ENCODE measurements at regions of chr19 and their contacts with region 1.

Region 1: GRCh38 chr19:44093931-44094765 is at the start of gene ZNF224:
- DNase-seq: peak; percentile 66
- ATAC-seq: peak; percentile 93
- H3K4me3 Mint-ChIP-seq: peak within 1 kb of the TSS; percentile 99
- H3K27ac Mint-ChIP-seq: peak within 1 kb of the TSS; percentile 89
- H3K4me1 Mint-ChIP-seq: peaks cover 14% of the 10 kb centered on the region
- H3K27me3 Mint-ChIP-seq: no peaks in the 10 kb centered on the region
- CTCF ChIP-seq: no peak
- total RNA-seq, gene ZNF224: 49.2 and 53.3 TPM in 2 replicates

Region 2: GRCh38 chr19:43901395-43902390 is 192.5 kb before region 1 on chr19:
- CTCF ChIA-PET with region 1: no interaction called
- POLR2A ChIA-PET with region 1: no interaction called
- intact Hi-C with region 1: loop called (anchors 1 kb)
- DNase-seq: peak; percentile 62
- ATAC-seq: peak; percentile 96
- H3K4me3 Mint-ChIP-seq: peak overlapping the region; percentile 93
- H3K27ac Mint-ChIP-seq: peak overlapping the region; percentile 82
- H3K4me1 Mint-ChIP-seq: peaks cover 18% of the 10 kb centered on the region
- H3K27me3 Mint-ChIP-seq: no peaks in the 10 kb centered on the region
- CTCF ChIP-seq: no peak

Region 3: GRCh38 chr19:44002566-44003460 is 91.3 kb before region 1 on chr19 and contains the start of gene ZNF230:
- CTCF ChIA-PET with region 1: interaction called, 3 read pairs
- POLR2A ChIA-PET with region 1: interaction called, 9 read pairs
- intact Hi-C with region 1: loop called (anchors 1 kb)
- DNase-seq: peak; percentile 63
- ATAC-seq: peak; percentile 94
- H3K4me3 Mint-ChIP-seq: peak within 1 kb of the TSS; percentile 99
- H3K27ac Mint-ChIP-seq: peak within 1 kb of the TSS; percentile 93
- H3K4me1 Mint-ChIP-seq: peaks cover 17% of the 10 kb centered on the region
- H3K27me3 Mint-ChIP-seq: no peaks in the 10 kb centered on the region
- CTCF ChIP-seq: no peak
- total RNA-seq, gene ZNF230: 12.1 and 15.0 TPM in 2 replicates

Region 4: DNA sequence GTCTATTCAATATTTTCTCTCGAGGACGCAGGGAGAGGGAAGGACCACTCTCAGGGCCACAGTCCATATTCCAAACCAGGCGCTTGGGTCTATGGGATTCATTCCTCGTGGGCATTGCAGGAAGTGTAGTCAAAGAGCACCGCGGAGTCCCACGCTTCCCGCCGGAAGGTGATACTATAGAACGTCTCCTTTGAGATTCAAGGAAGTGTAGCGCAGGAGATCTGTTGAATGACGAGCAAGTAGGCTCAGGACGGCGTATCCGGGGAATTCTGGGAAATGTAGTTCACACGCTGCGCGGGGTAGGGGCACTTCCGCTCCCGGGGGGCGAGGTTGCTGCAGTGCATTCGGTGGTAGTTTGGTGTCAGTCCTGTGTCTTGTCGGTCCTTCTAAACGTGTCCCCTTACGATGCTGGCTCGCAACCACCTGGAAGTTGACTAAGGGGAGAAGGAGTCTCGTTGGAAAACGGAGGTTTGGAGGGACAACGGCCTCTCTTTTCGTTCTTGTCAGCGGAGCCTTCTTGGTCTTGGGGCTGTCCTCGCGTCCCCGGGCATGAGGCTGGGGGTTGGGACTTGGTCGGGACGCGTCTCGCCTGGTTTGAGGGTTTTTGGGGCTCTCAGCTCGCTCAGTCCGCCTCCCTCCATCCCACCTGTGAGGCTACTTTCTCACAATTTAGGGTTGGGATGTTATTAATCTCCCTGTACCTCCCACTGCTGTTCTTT is 22.2 kb before region 1 on chr19 and contains the start of gene ZNF284:
- CTCF ChIA-PET with region 1: interaction called, 4 read pairs
- POLR2A ChIA-PET with region 1: interaction called, 6 read pairs
- intact Hi-C with region 1: loop called (anchors 1 kb)
- DNase-seq: peak; percentile 67
- ATAC-seq: peak; percentile 100
- H3K4me3 Mint-ChIP-seq: peak within 1 kb of the TSS; percentile 94
- H3K27ac Mint-ChIP-seq: peak within 1 kb of the TSS; percentile 80
- H3K4me1 Mint-ChIP-seq: peaks cover 26% of the 10 kb centered on the region
- H3K27me3 Mint-ChIP-seq: peaks cover 1% of the 10 kb centered on the region
- CTCF ChIP-seq: no peak
- total RNA-seq, gene ZNF284: 2.1 and 2.3 TPM in 2 replicates

Region 5: GRCh38 chr19:44131955-44132354 is 37.8 kb after region 1 on chr19:
- CTCF ChIA-PET with region 1: no interaction called
- POLR2A ChIA-PET with region 1: no interaction called
- intact Hi-C with region 1: no loop called
- DNase-seq: no peak
- ATAC-seq: no peak
- H3K4me3 Mint-ChIP-seq: no peak overlapping the region
- H3K27ac Mint-ChIP-seq: no peak overlapping the region
- H3K4me1 Mint-ChIP-seq: no peaks in the 10 kb centered on the region
- H3K27me3 Mint-ChIP-seq: no peaks in the 10 kb centered on the region
- CTCF ChIP-seq: no peak

Region 6: GRCh38 chr19:44164673-44165512 is 70.7 kb after region 1 on chr19 and contains the start of gene ZNF226:
- CTCF ChIA-PET with region 1: no interaction called
- POLR2A ChIA-PET with region 1: interaction called, 13 read pairs
- intact Hi-C with region 1: loop called (anchors 1 kb)
- DNase-seq: peak; percentile 57
- ATAC-seq: peak; percentile 92
- H3K4me3 Mint-ChIP-seq: peak within 1 kb of the TSS; percentile 99
- H3K27ac Mint-ChIP-seq: peak within 1 kb of the TSS; percentile 97
- H3K4me1 Mint-ChIP-seq: peaks cover 31% of the 10 kb centered on the region
- H3K27me3 Mint-ChIP-seq: no peaks in the 10 kb centered on the region
- CTCF ChIP-seq: no peak
- total RNA-seq, gene ZNF226: 37.7 and 38.3 TPM in 2 replicates

Region 7: GRCh38 chr19:44401139-44402115 is 307.3 kb after region 1 on chr19 and contains the start of gene ZNF285:
- CTCF ChIA-PET with region 1: no interaction called
- POLR2A ChIA-PET with region 1: no interaction called
- intact Hi-C with region 1: loop called (anchors 5 kb)
- DNase-seq: peak; percentile 75
- ATAC-seq: peak; percentile 97
- H3K4me3 Mint-ChIP-seq: peak within 1 kb of the TSS; percentile 88
- H3K27ac Mint-ChIP-seq: peak within 1 kb of the TSS; percentile 46
- H3K4me1 Mint-ChIP-seq: peaks cover 14% of the 10 kb centered on the region
- H3K27me3 Mint-ChIP-seq: peaks cover 14% of the 10 kb centered on the region
- CTCF ChIP-seq: no peak
- total RNA-seq, gene ZNF285: 4.5 TPM in 2 replicates

Region 8: GRCh38 chr19:44845286-44845611 is 751.1 kb after region 1 on chr19:
- CTCF ChIA-PET with region 1: no interaction called
- POLR2A ChIA-PET with region 1: no interaction called
- intact Hi-C with region 1: no loop called
- DNase-seq: no peak
- ATAC-seq: no peak
- H3K4me3 Mint-ChIP-seq: peak overlapping the region; percentile 89
- H3K27ac Mint-ChIP-seq: no peak overlapping the region
- H3K4me1 Mint-ChIP-seq: peaks cover 31% of the 10 kb centered on the region
- H3K27me3 Mint-ChIP-seq: peaks cover 32% of the 10 kb centered on the region
- CTCF ChIP-seq: peak; percentile 10